Ascending aorta (tissue), 2 donors: ENCODE measurements at regions of chr18 and their contacts with region 1.

Region 1: GRCh38 chr18:12236934-12237832 is 17.0 kb upstream of the CIDEA start:
- DNase-seq: peak in 1 of 2 donors; percentile 77
- H3K4me3 ChIP-seq: peak overlapping the region in 1 of 2 donors; percentile 12
- H3K27ac ChIP-seq: no peak overlapping the region
- H3K4me1 ChIP-seq: peaks cover 0 to 8% of the 10 kb centered on the region in 2 donors
- H3K27me3 ChIP-seq: no peaks in the 10 kb centered on the region
- CTCF ChIP-seq: peak; percentile 57 to 85 (median 82)

Region 2: GRCh38 chr18:12066910-12067511 is 170.2 kb before region 1 on chr18:
- intact Hi-C with region 1: loop called (anchors 5 kb)
- DNase-seq: no peak
- H3K4me3 ChIP-seq: no peak overlapping the region
- H3K27ac ChIP-seq: no peak overlapping the region
- H3K4me1 ChIP-seq: no peaks in the 10 kb centered on the region
- H3K27me3 ChIP-seq: no peaks in the 10 kb centered on the region
- CTCF ChIP-seq: no peak